Transverse colon (tissue), 4 donors: ENCODE measurements at regions of chr7 and their contacts with region 1.

Region 1: GRCh38 chr7:159169391-159169790 is 24.7 kb upstream of the VIPR2 start:
- DNase-seq: no peak
- H3K4me3 ChIP-seq: no peak overlapping the region
- H3K27ac ChIP-seq: no peak overlapping the region
- H3K4me1 ChIP-seq: no peaks in the 10 kb centered on the region
- H3K27me3 ChIP-seq: no peaks in the 10 kb centered on the region
- CTCF ChIP-seq: no peak
- EP300 ChIP-seq: no peak
- POLR2A ChIP-seq: no peak

Region 2: GRCh38 chr7:159127691-159128642 is 41.4 kb before region 1 on chr7:
- in situ Hi-C with region 1: no loop called
- intact Hi-C with region 1: loop called (anchors 2 kb)
- DNase-seq: no peak
- H3K4me3 ChIP-seq: no peak overlapping the region
- H3K27ac ChIP-seq: no peak overlapping the region
- H3K4me1 ChIP-seq: no peaks in the 10 kb centered on the region
- H3K27me3 ChIP-seq: no peaks in the 10 kb centered on the region
- CTCF ChIP-seq: no peak
- EP300 ChIP-seq: no peak
- POLR2A ChIP-seq: no peak